ENCODE measurements at regions of chrX and their contacts with region 1.

Region 1: GRCh38 chrX:17736856-17737706 is at the start of gene SCML1:
- DNase-seq: peak; percentile 95
- H3K4me3 Mint-ChIP-seq: peak within 1 kb of the TSS; percentile 84
- H3K27ac Mint-ChIP-seq: peak within 1 kb of the TSS; percentile 88
- H3K4me1 Mint-ChIP-seq: peaks cover 26% of the 10 kb centered on the region
- H3K27me3 Mint-ChIP-seq: no peaks in the 10 kb centered on the region
- total RNA-seq, gene SCML1: 11.4 to 11.8 TPM

Region 2: DNA sequence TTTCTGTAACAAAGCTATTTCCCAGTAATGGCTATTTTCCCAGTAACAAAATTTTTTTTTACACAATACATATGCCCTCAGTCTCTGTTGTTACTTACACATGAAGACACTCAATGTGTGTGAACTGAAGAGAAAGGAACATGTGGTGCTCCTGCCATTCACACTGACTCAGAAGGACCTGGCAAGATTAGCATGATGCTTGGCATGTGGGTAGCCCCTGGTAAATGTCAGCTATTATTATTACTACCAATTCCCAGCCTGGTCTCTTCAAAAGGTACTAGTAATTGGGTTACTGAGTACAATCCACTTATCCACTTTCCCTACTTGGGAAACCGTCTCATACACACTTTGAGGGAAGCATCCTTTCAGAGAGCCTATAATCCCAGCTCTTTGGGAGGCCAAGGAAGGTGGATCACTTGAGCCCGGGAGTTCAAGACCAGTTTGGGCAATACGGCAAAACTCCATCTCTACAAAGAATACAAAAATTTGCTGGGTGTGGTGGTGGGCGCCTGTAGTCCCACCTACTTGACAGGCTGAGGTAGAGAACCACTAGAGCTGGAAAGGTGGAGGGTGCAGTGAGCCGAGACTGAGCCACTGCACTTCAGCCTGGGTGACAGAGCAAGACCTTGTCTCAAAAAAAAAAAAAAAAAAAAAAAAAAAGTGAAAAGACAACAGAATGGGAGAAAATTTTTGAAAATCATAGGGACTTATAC is 881.6 kb before region 1 on chrX:
- CTCF ChIA-PET with region 1: no interaction called
- intact Hi-C with region 1: loop called (anchors 5 kb)
- DNase-seq: peak; percentile 31
- H3K4me3 Mint-ChIP-seq: peak overlapping the region; percentile 36
- H3K27ac Mint-ChIP-seq: peak overlapping the region; percentile 92
- H3K4me1 Mint-ChIP-seq: peaks cover 63% of the 10 kb centered on the region
- H3K27me3 Mint-ChIP-seq: no peaks in the 10 kb centered on the region

Region 3: DNA sequence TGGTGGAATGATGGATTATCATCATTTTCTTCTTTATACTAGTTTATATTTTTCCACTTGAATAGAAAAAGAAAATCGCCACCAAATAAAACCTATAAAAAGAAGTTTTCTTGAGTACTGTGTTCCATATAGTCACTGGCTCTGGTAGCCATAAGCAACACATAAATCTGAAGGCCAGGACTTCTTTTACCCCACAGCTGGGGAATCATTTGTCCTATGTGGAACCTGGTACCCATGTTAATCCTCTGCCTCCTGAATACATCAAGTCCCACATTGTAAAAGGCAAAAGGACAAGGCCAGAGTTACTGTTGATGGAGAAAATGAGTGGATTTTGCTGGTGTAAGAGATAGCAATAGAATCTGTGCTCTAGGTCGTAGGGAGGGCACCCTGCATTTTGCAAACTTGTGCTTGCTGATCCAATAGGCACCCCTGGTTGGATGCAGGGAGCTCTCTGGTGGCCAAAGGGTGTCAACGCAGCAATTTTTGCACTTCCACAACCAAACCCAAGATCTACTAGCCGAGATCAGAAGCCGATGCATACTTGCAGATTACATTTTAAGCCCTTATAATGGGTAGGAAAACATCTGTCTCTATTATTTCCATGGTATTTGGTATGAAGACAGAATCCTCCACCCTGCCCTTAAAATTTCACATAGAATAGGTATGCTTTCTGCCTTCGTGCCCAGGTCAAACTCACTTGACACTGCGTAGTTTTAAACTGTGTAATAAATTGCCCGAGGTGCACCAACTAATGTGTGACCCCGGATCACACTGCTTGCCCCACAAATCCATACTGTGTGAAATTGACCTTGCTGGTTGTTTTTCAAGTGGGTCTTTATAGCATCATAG is 146.0 kb before region 1 on chrX:
- CTCF ChIA-PET with region 1: no interaction called
- intact Hi-C with region 1: loop called (anchors 1 kb)
- DNase-seq: peak; percentile 70
- H3K4me3 Mint-ChIP-seq: no peak overlapping the region
- H3K27ac Mint-ChIP-seq: peak overlapping the region; percentile 82
- H3K4me1 Mint-ChIP-seq: peaks cover 44% of the 10 kb centered on the region
- H3K27me3 Mint-ChIP-seq: peaks cover 2% of the 10 kb centered on the region

Region 4: DNA sequence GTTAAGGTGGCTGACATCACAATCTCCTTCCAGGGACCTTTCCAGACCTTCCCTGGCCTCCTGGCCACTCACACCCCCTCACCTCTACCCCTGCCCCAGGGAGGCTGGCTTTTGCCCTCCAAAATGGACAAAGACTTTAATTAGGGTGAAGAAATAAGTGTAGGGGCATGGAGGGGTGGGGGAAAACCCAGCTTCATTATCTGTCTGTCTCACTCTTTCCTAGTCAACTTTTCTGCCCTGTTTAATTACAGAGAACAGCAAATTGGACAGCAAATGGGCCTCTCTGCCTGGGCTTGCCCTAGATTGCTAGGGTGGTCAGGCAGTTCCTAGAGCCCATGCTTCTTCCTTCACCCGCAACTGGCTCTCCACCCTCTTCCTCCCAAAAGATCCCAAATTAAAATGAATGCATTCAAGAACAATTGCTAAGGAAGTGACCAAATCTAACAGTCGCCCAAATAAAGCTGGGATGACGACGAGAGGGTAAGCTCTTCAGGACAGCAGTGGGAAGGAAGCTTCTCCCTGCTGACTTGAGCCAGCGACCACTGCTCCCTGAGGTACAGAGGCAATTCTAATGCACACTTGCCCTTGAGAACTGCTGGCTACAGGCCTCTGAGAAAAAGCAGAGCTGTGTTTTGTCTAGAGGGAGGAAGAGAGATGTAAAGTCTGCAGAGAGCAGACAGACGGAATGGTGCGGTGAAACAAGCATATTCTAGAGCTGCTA is 111.6 kb after region 1 on chrX:
- CTCF ChIA-PET with region 1: no interaction called
- intact Hi-C with region 1: loop called (anchors 2 kb)
- DNase-seq: peak; percentile 10
- H3K4me3 Mint-ChIP-seq: no peak overlapping the region
- H3K27ac Mint-ChIP-seq: peak overlapping the region; percentile 70
- H3K4me1 Mint-ChIP-seq: peaks cover 14% of the 10 kb centered on the region
- H3K27me3 Mint-ChIP-seq: no peaks in the 10 kb centered on the region

Region 5: DNA sequence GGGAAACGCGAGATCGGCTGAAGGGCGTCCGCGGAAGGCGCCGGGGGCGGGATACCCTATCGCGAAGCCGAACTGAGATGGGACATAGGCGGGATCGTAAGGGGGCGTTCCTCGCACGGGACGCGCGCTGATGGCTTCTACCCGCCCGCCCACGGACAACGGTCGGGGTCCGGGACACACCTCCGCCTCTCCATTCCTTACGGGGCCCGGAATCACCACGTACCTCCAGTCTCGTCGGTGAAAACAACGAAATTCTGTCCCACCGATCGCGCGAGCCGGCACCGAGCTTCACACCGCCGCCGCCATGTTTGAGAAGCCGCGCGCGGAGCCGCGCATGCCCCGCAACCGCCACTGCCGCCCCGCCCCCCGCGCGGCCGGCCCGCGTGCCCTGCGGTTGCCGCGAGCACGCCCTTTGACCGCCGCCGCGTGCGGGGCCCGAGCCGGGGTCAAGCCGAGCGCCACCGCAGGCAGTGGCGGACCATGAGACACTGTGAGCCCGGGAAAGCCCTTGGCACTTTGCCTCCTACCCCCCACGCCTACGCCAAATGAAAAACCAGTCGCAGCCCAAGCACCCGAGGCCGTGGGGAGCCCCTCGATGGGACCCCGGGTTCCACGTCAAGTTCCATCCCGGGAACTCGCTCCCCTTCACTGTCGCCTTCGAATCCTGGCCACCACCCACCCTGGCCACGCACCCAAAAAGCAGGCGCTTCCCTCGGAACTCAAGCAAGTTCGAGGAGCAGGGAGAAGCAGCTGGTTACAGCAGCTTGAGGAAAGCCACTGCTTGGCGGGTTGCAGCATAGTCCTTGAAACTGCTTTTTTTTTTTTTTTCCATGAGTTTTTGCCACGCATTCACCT is 617.5 kb after region 1 on chrX and contains the start of gene SCML2:
- CTCF ChIA-PET with region 1: no interaction called
- intact Hi-C with region 1: loop called (anchors 1 kb)
- DNase-seq: peak; percentile 40
- H3K4me3 Mint-ChIP-seq: peak within 1 kb of the TSS; percentile 72
- H3K27ac Mint-ChIP-seq: no peak within 1 kb of the TSS
- H3K4me1 Mint-ChIP-seq: peaks cover 6% of the 10 kb centered on the region
- H3K27me3 Mint-ChIP-seq: peaks cover 15% of the 10 kb centered on the region
- total RNA-seq, gene SCML2: 4.6 to 5.1 TPM